ENCODE measurements at regions of chr12 and their contacts with region 1.

Region 1: GRCh38 chr12:49031553-49032162 is 13.1 kb upstream of the PRKAG1 start:
- DNase-seq: no peak
- ATAC-seq: peak in 1 of 2 experiments; percentile 4; a peak in 3 of 6 replicates
- H3K4me3 ChIP-seq: no peak overlapping the region
- H3K27ac ChIP-seq: no peak overlapping the region
- H3K4me1 ChIP-seq: no peaks in the 10 kb centered on the region
- CTCF ChIP-seq: no peak
- EP300 ChIP-seq: no peak
- POLR2A ChIP-seq: no peak
- RAD21 ChIP-seq: no peak

Region 2: GRCh38 chr12:49043856-49044258 is 12.2 kb after region 1 on chr12:
- CTCF ChIA-PET with region 1: interaction called, 34 read pairs
- POLR2A ChIA-PET with region 1: no interaction called
- DNase-seq: peak; percentile 73 to 74
- ATAC-seq: peak; percentile 62 to 86; a peak in 5 of 6 replicates
- H3K4me3 ChIP-seq: no peak overlapping the region
- H3K27ac ChIP-seq: no peak overlapping the region
- H3K4me1 ChIP-seq: no peaks in the 10 kb centered on the region
- CTCF ChIP-seq: peak; percentile 55
- EP300 ChIP-seq: no peak
- POLR2A ChIP-seq: no peak
- RAD21 ChIP-seq: no peak

Region 3: DNA sequence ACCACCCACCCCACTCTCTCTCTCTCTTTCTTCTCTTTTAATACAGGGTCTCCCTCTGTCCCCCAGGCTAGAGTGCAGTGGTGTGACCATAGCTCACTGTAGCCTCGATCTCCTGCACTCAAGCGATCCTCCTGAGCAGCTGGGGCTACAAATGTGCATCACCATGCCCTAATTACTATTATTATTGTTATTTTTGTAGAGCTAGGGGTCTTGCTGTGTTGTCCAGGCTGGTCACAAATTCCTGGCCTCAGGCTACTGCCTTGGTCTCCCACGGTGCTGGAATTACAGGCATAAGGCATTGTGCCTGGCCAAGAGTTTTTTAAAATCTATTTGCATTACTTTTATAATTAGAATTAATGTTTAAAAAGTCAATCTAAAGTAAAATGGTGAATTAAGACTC is 122.6 kb after region 1 on chr12:
- CTCF ChIA-PET with region 1: no interaction called
- POLR2A ChIA-PET with region 1: no interaction called
- DNase-seq: no peak
- ATAC-seq: no peak
- H3K4me3 ChIP-seq: no peak overlapping the region
- H3K27ac ChIP-seq: no peak overlapping the region
- H3K4me1 ChIP-seq: no peaks in the 10 kb centered on the region
- CTCF ChIP-seq: no peak
- EP300 ChIP-seq: no peak
- POLR2A ChIP-seq: no peak
- RAD21 ChIP-seq: no peak

Measured in A549 (cell line).